HCT116 (cell line): ENCODE measurements at regions of chr20 and their contacts with region 1.

Region 1: DNA sequence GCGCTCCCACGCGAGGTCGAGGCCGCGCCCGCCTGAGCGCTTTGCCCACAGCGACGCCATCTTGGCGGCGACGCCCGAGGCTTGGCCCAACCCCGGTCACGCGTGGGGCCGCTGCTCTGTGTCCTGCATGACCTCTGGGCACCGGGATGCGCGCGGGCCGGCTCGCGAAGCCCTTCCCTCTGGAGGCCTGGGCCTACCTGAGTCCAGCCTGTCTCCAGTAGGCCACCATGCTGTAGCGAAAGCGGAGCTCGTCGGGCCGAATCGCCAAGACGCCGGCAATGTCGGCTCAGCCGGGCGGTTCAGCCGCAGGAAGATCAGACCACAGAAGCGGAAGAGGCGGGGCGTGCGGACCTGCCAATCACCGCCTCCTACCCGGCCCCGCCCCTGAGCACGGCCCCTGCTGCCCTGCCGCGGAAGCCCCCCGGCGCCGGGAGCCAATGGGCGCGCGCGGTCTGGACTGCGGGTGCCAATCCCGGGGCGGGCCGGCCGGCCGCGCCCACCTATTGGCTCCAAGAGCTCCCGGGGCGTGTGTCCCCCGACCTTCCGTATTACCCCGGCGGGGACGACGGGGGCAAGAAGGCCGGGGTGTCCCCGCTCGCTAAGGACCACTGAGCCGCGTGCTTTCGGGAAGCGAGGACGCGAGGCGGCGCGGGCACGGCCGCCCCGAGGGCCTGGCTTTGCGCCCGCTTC is at the start of gene ATP5F1E:
- DNase-seq: peak; percentile 72
- ATAC-seq: peak; percentile 97
- H3K4me3 ChIP-seq: peak within 1 kb of the TSS; percentile 86
- H3K27ac ChIP-seq: peak within 1 kb of the TSS; percentile 78
- H3K4me1 ChIP-seq: peaks cover 10 to 25% of the 10 kb centered on the region in 2 experiments
- H3K27me3 ChIP-seq: no peaks in the 10 kb centered on the region
- CTCF ChIP-seq: no peak
- POLR2A ChIP-seq: peak; percentile 67
- RAD21 ChIP-seq: no peak
- total RNA-seq, gene ATP5F1E: 72.8 TPM

Region 2: DNA sequence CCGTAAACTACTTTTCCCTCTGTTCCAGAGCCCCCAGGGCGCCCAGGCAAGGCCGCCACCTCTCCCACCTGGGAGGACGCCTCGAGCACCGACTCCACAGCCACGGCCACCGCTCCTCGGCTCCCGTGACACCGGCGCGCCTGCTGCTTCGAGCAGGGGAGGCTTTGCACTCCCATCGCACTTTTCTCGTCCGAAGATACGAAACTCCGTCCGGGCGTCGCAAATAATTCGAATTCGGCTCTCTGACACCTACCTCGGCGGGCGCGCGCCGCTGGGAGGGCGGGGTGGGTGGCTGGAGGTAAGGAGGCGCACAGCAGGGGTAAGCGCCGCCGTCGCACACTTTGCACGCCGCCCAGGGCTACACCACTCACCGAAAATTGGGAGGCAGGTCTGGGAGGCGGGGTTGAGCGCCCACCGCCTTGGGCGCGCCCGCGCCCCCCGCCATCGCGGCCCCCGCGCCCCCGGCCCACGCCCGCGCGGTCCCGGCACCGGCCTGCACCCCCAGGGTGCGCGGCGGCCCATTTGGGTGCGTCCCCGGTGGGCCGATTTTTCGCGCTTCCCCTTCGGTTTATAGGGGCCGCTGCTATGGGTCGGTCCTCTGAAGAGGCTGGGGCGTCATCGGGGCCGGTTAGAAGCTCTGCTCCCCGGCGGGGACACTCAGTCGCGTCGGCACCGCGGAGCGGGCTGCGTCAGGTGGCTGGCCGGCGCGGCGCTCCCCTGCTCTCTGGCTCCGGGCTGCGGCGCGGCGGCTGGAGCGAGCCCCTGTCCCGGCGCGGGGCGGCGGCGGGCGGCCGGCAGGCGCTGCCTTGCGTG is 143.4 kb before region 1 on chr20:
- CTCF ChIA-PET with region 1: no interaction called
- POLR2A ChIA-PET with region 1: no interaction called
- RAD21 ChIA-PET with region 1: no interaction called
- intact Hi-C with region 1: loop called (anchors 10 kb)
- DNase-seq: no peak
- ATAC-seq: peak; percentile 64
- H3K4me3 ChIP-seq: peak overlapping the region; percentile 71
- H3K27ac ChIP-seq: peak overlapping the region; percentile 85
- H3K4me1 ChIP-seq: peaks cover 6 to 21% of the 10 kb centered on the region in 2 experiments
- H3K27me3 ChIP-seq: no peaks in the 10 kb centered on the region
- CTCF ChIP-seq: no peak
- POLR2A ChIP-seq: peak; percentile 97
- RAD21 ChIP-seq: no peak

Region 3: GRCh38 chr20:58980700-58981627 is 51.2 kb before region 1 on chr20 and contains the start of gene NELFCD:
- CTCF ChIA-PET with region 1: no interaction called
- POLR2A ChIA-PET with region 1: interaction called, 4 read pairs
- RAD21 ChIA-PET with region 1: no interaction called
- intact Hi-C with region 1: loop called (anchors 5 kb)
- DNase-seq: peak; percentile 51
- ATAC-seq: peak; percentile 91
- H3K4me3 ChIP-seq: peak within 1 kb of the TSS; percentile 88 to 94
- H3K27ac ChIP-seq: peak within 1 kb of the TSS; percentile 87
- H3K4me1 ChIP-seq: peaks cover 6 to 17% of the 10 kb centered on the region in 2 experiments
- H3K27me3 ChIP-seq: no peaks in the 10 kb centered on the region
- CTCF ChIP-seq: no peak
- POLR2A ChIP-seq: peak; percentile 51
- RAD21 ChIP-seq: no peak
- total RNA-seq, gene NELFCD: 88.2 TPM

Region 4: DNA sequence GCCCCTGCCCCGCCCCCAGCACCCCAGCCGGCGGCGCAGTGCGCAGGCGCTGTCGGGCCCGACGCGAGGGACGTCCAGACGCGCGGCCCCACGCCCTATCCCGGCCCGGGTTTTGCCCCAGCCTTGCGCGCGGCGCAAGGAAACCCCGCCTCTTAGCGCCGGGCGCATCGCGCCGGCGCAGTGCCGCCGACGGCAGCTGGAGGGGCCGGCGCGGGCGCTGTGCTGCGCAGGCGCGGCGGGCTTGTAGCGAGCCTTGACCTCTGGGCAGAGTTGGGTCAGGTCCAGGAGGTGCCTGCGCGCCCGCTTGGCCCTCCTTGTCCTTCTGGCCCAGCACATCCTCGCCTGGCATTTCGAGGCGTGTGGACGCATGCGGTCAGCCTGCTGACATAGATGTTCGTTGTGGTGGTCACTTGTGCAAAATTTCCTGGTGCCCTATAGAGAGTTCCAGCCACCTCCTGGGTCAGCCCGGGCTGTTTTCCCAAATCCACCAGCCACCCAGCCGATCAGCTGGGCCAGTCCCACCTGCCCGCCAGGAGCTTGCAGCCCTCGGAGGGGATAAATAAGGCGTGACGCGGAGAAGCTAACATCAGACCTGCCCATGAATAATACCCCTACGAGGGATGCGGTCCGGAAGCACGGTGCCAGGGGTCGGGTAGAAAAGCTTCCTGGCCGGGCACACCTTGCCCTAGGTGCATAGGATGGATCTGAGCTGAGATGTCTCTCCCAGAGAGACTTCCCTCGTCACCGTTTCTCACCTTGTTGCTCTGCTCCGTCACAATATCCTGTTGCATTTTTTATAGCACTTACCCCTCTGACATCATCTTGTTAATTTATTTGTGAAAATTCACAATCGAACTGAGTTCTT is 10.9 kb after region 1 on chr20:
- CTCF ChIA-PET with region 1: interaction called, 8 read pairs
- POLR2A ChIA-PET with region 1: interaction called, 13 read pairs
- RAD21 ChIA-PET with region 1: no interaction called
- intact Hi-C with region 1: no loop called
- DNase-seq: peak; percentile 84
- ATAC-seq: peak; percentile 98
- H3K4me3 ChIP-seq: peak overlapping the region; percentile 82 to 84
- H3K27ac ChIP-seq: peak overlapping the region; percentile 83
- H3K4me1 ChIP-seq: peaks cover 15 to 24% of the 10 kb centered on the region in 2 experiments
- H3K27me3 ChIP-seq: no peaks in the 10 kb centered on the region
- CTCF ChIP-seq: no peak
- POLR2A ChIP-seq: no peak
- RAD21 ChIP-seq: no peak

Region 5: GRCh38 chr20:59269411-59270025 is 237.3 kb after region 1 on chr20:
- CTCF ChIA-PET with region 1: no interaction called
- POLR2A ChIA-PET with region 1: no interaction called
- RAD21 ChIA-PET with region 1: no interaction called
- intact Hi-C with region 1: no loop called
- DNase-seq: no peak
- ATAC-seq: no peak
- H3K4me3 ChIP-seq: no peak overlapping the region
- H3K27ac ChIP-seq: no peak overlapping the region
- H3K4me1 ChIP-seq: no peaks in the 10 kb centered on the region
- H3K27me3 ChIP-seq: peaks cover 86% of the 10 kb centered on the region
- CTCF ChIP-seq: no peak
- POLR2A ChIP-seq: no peak
- RAD21 ChIP-seq: no peak